ENCODE measurements at regions of chr1 and their contacts with region 1.

Region 1: DNA sequence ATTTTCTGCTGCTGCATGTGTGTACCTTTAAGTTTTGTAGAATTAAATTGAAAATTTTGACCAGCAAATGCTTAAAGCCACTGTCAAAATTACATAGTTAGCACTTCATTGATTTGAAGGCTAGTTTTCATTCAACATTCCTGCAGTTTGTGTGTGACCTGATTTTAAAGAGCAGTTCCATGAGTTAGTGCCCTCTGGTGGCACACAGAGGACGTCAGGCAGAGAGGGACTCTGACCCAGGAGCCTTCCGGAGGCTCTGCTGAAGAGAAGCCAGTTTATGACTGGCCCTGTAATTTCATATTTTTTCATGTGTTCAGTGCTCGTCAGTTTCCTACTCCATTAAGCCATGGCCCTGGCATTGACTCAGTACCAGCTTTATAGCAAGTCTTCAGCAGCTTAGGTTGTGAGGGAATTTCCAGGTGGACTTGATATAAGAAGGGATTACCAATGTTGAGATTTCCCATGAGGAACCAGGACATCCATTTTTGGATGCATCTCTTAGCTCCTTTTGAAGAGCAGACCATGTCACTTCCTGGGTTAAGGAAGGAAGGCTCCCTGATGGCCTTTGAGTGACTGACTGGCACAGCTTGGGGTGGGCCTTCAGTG is 104.7 kb downstream of the CAMTA1 start:
- DNase-seq: peak; percentile 66
- H3K4me3 ChIP-seq: no peak overlapping the region
- H3K27ac ChIP-seq: no peak overlapping the region
- H3K4me1 ChIP-seq: no peaks in the 10 kb centered on the region
- CTCF ChIP-seq: peak; percentile 94

Region 2: GRCh38 chr1:6727535-6727934 is 162.4 kb before region 1 on chr1:
- CTCF ChIA-PET with region 1: no interaction called
- POLR2A ChIA-PET with region 1: no interaction called
- intact Hi-C with region 1: loop called (anchors 1 kb)
- DNase-seq: peak; percentile 70
- H3K4me3 ChIP-seq: no peak overlapping the region
- H3K27ac ChIP-seq: no peak overlapping the region
- H3K4me1 ChIP-seq: no peaks in the 10 kb centered on the region
- CTCF ChIP-seq: peak; percentile 98

Region 3: DNA sequence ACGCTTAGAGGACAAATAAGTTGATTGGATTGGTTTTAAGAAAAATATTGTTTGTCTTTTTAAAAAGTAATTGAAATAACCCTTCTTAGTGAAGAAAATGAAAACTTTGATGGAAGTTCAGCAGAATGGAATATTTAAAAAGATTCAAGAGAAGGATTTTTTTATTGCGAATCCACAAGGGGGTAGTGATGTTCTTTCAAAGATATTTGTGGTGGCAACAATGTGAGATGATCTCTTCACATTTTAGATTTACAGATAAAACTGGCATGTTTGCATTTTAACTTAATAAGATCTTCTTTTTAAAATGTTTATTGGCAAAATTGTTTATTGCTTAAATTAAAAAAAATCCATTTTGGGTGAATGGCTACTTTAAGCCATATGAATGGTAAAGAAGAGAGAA is 95.8 kb before region 1 on chr1:
- CTCF ChIA-PET with region 1: no interaction called
- POLR2A ChIA-PET with region 1: no interaction called
- intact Hi-C with region 1: loop called (anchors 1 kb)
- DNase-seq: peak; percentile 29
- H3K4me3 ChIP-seq: no peak overlapping the region
- H3K27ac ChIP-seq: no peak overlapping the region
- H3K4me1 ChIP-seq: peaks cover 4% of the 10 kb centered on the region
- CTCF ChIP-seq: peak; percentile 76

Measured in OCI-LY7 (cell line).